Aorta (tissue), 5 donors: ENCODE measurements at regions of chr6 and their contacts with region 1.

Region 1: DNA sequence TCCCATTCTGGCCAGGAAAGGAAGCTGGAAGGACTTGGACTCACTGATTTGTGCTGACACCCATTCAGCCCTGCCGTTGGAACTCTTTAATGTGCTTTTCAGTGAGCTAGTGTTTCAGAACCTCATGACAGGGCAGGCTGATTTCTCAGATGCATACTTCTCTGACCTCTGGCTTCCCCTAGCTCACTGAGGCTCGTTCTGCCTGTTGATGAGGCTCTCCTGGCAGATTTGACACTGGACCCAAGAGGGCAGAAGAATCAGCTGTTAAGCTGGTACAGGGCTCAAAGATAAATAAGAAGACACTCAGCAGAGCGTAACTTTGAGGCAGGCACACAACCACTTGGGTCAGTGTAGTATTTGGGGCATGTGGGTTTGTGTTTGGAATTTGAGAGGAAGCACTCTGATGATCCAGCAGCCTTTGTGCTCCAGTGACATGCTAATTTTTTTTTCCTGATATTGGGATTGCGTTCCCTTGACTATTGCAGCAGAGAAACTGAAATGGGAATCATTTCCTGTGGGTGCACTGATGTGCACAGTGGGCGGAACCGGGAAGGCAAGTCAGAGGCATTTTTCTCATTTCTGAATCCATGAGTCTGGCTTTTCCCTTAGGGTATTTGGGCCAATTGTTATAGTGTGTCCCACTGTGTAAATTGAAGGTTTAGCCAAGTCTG is 80.2 kb downstream of the CARMIL1 start:
- DNase-seq: peak; percentile 63 to 79
- ATAC-seq: peak; percentile 78
- H3K4me3 ChIP-seq: no peak overlapping the region
- H3K27ac ChIP-seq: peak overlapping the region; percentile 78 to 93
- H3K4me1 ChIP-seq: peaks cover 3 to 15% of the 10 kb centered on the region in 2 donors
- H3K27me3 ChIP-seq: no peaks in the 10 kb centered on the region

Region 2: GRCh38 chr6:25297039-25297441 is 62.3 kb before region 1 on chr6:
- intact Hi-C with region 1: loop called in 1 of 2 experiments (anchors 5 kb)
- DNase-seq: no peak
- ATAC-seq: peak; percentile 82
- H3K4me3 ChIP-seq: no peak overlapping the region
- H3K27ac ChIP-seq: peak overlapping the region; percentile 98 to 100
- H3K4me1 ChIP-seq: peaks cover 8 to 34% of the 10 kb centered on the region in 2 donors
- H3K27me3 ChIP-seq: no peaks in the 10 kb centered on the region

Region 3: DNA sequence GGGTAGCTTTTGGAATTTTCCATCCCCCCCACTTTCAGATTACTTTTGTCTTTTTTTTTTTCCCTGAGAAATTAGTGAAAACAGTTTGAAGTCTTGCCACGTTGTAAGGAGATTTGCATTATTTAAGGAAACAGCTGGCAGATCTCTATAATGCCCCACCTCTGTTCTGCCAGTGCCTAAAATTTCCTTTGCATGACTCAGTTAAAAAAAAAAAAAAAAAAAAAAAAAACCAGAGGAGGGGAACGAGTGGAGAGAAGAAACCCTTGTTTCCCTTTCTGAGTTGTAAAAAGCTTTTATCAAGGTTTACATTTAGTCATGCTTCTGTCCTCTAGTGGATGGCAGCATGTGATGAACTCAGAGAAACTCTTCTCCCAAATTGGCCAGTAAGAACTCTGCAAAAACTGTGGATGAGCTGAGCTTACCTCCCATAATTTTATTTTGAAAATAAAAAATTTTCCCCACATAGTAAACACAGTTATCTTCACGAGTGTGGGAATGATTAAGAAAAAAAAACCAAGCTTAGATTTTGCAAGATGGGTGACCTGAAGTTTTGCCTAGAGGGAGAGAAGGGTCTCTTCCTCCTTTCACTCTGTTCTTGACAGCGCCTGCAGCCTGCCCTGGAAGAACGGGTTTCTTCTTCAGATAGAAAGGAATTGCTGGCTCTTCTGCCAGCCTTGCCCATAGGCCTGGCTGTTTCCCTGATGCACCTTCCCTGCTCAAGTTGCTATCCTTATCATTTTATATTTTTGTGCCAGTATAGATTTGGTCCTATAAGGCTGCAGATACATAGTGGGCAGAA is 46.4 kb before region 1 on chr6:
- intact Hi-C with region 1: loop called in 1 of 2 experiments (anchors 5 kb)
- DNase-seq: no peak
- ATAC-seq: peak; percentile 46
- H3K4me3 ChIP-seq: no peak overlapping the region
- H3K27ac ChIP-seq: peak overlapping the region in 1 of 2 donors; percentile 86
- H3K4me1 ChIP-seq: peaks cover 14 to 18% of the 10 kb centered on the region in 2 donors
- H3K27me3 ChIP-seq: no peaks in the 10 kb centered on the region

Region 4: GRCh38 chr6:25835442-25836283 is 476.3 kb after region 1 on chr6:
- intact Hi-C with region 1: no loop called
- DNase-seq: peak in 1 of 2 donors; percentile 47
- ATAC-seq: peak; percentile 68
- H3K4me3 ChIP-seq: no peak overlapping the region
- H3K27ac ChIP-seq: peak overlapping the region; percentile 58 to 97
- H3K4me1 ChIP-seq: peaks cover 2 to 10% of the 10 kb centered on the region in 2 donors
- H3K27me3 ChIP-seq: no peaks in the 10 kb centered on the region